Naive thymus-derived CD4-positive, alpha-beta T cell (primary cell): ENCODE measurements at regions of chr9 and their contacts with region 1.

Region 1: GRCh38 chr9:6681147-6681956 is 35.8 kb upstream of the GLDC start:
- DNase-seq: peak; percentile 71 to 95 (median 90)
- ATAC-seq: peak; percentile 90
- H3K4me3 ChIP-seq: peak overlapping the region; percentile 89
- H3K4me3 Mint-ChIP-seq: peak overlapping the region; percentile 88 to 98 (median 95)
- H3K27ac ChIP-seq: peak overlapping the region; percentile 91
- H3K27ac Mint-ChIP-seq: peak overlapping the region; percentile 97 to 100 (median 99)
- H3K4me1 ChIP-seq: peaks cover 0 to 6% of the 10 kb centered on the region in 2 donors
- H3K4me1 Mint-ChIP-seq: peaks cover 7 to 31% (median 20%) of the 10 kb centered on the region in 7 donors
- H3K27me3 ChIP-seq: no peaks in the 10 kb centered on the region
- H3K27me3 Mint-ChIP-seq: no peaks in the 10 kb centered on the region

Region 2: DNA sequence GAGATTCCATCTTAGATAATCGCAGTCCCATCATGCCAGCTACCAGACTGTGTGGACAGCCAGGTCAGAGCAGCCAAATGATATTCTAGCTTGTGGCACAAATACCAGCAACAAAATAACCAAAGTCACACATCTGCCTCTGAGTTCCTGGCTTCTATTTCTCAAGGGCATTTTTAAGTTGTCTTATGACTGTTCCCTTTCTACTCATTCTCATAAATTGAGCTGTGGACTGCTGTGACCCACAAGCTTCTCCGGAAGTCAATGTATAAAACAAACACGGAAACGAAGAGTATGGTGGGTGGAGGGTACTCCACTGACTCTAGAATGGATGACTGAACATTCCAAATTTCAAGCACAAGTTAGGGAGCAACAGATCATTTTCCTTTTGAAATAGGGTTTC is 1127.1 kb before region 1 on chr9:
- CTCF ChIA-PET with region 1: no interaction called
- POLR2A ChIA-PET with region 1: no interaction called
- intact Hi-C with region 1: no loop called
- DNase-seq: no peak
- ATAC-seq: no peak
- H3K4me3 ChIP-seq: no peak overlapping the region
- H3K4me3 Mint-ChIP-seq: no peak overlapping the region
- H3K27ac ChIP-seq: no peak overlapping the region
- H3K27ac Mint-ChIP-seq: peak overlapping the region in 1 of 9 donors; percentile 51
- H3K4me1 ChIP-seq: peaks cover 22 to 26% of the 10 kb centered on the region in 2 donors
- H3K4me1 Mint-ChIP-seq: peaks cover 22 to 41% (median 31%) of the 10 kb centered on the region in 7 donors
- H3K27me3 ChIP-seq: no peaks in the 10 kb centered on the region
- H3K27me3 Mint-ChIP-seq: peaks cover 0 to 4% (median 0%) of the 10 kb centered on the region in 5 donors

Region 3: GRCh38 chr9:5843794-5844504 is 837.4 kb before region 1 on chr9:
- CTCF ChIA-PET with region 1: no interaction called
- POLR2A ChIA-PET with region 1: no interaction called
- intact Hi-C with region 1: loop called in 1 of 2 experiments (anchors 5 kb)
- DNase-seq: peak in 2 of 9 donors; percentile 7 to 22
- ATAC-seq: peak; percentile 20
- H3K4me3 ChIP-seq: peak overlapping the region; percentile 5
- H3K4me3 Mint-ChIP-seq: peak overlapping the region; percentile 75 to 85 (median 80)
- H3K27ac ChIP-seq: peak overlapping the region; percentile 24
- H3K27ac Mint-ChIP-seq: peak overlapping the region; percentile 58 to 93 (median 91)
- H3K4me1 ChIP-seq: peaks cover 45 to 47% of the 10 kb centered on the region in 2 donors
- H3K4me1 Mint-ChIP-seq: peaks cover 50 to 83% (median 64%) of the 10 kb centered on the region in 7 donors
- H3K27me3 ChIP-seq: no peaks in the 10 kb centered on the region
- H3K27me3 Mint-ChIP-seq: no peaks in the 10 kb centered on the region

Region 4: DNA sequence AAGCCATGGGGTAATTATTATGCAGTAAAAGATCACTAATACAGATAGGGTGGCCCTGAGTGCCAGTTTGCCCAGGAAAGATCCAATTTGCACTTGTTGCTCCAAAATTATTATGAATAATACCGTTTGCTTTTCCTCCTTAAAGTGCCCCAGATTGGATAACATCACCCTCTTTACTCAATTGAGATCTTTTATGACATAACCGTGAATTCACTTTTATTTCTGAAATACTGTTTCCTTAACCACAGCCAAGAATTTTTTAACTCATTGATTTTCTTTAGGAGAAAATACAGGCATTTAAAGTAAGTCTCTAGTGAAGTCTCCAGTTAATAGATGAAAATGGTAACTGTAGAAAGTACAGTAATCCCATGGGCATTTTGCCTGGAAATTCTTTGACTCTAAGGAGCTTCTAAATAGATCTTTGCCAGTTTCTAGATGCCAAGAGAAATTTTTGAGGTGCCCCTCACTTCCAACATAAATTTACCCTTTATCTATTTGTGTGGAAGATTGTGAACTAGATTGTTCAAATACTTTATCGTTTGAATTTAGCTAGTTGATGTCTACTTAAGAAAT is 169.2 kb before region 1 on chr9:
- CTCF ChIA-PET with region 1: no interaction called
- POLR2A ChIA-PET with region 1: no interaction called
- intact Hi-C with region 1: no loop called
- DNase-seq: no peak
- ATAC-seq: no peak
- H3K4me3 ChIP-seq: no peak overlapping the region
- H3K4me3 Mint-ChIP-seq: no peak overlapping the region
- H3K27ac ChIP-seq: no peak overlapping the region
- H3K27ac Mint-ChIP-seq: peak overlapping the region in 1 of 9 donors; percentile 13
- H3K4me1 ChIP-seq: no peaks in the 10 kb centered on the region
- H3K4me1 Mint-ChIP-seq: peaks cover 0 to 2% (median 0%) of the 10 kb centered on the region in 7 donors
- H3K27me3 ChIP-seq: no peaks in the 10 kb centered on the region
- H3K27me3 Mint-ChIP-seq: no peaks in the 10 kb centered on the region

Region 5: DNA sequence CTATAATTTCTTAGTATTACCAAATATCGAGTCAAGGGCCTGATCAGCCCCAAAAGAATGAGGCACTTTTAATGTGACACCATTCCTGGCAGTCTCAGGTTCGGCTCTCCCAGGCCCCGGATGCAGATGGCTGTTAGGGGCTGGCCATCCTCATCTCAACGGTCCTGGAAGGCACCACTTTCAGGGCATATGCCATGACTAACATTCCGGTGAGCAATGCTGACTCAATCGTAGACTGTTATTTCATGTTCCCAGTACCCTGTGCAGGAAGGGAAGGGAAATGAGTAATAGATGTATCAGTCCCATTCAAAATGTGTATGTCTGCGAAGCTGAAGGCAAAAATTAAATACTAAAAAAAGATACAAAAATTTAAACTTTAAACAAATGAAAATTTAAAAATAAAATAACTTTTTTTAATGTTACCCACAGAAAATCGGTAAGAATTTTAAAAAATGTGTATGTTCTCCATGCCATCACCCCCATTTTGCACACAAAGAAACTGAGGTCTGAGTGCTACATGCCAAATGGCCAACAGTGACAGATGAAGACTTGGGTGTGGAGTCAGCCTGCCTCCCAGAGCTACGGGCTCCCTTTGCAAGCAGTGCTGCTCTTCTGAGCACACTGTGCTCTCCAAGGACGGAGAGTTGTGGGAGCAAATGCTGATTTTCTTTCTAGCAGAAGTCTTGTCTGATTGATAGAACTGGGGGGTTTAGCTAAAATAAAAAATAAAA is 114.8 kb before region 1 on chr9:
- CTCF ChIA-PET with region 1: no interaction called
- POLR2A ChIA-PET with region 1: no interaction called
- intact Hi-C with region 1: loop called in 1 of 2 experiments (anchors 5 kb)
- DNase-seq: peak in 1 of 9 donors; percentile 57
- ATAC-seq: peak; percentile 69
- H3K4me3 ChIP-seq: no peak overlapping the region
- H3K4me3 Mint-ChIP-seq: peak overlapping the region in 1 of 10 donors; percentile 62
- H3K27ac ChIP-seq: no peak overlapping the region
- H3K27ac Mint-ChIP-seq: peak overlapping the region in 2 of 9 donors; percentile 31 to 72
- H3K4me1 ChIP-seq: no peaks in the 10 kb centered on the region
- H3K4me1 Mint-ChIP-seq: peaks cover 0 to 23% (median 0%) of the 10 kb centered on the region in 7 donors
- H3K27me3 ChIP-seq: no peaks in the 10 kb centered on the region
- H3K27me3 Mint-ChIP-seq: peaks cover 0 to 7% (median 5%) of the 10 kb centered on the region in 5 donors

Region 6: GRCh38 chr9:6645355-6646292 is 35.7 kb before region 1 on chr9 and contains the start of gene GLDC:
- CTCF ChIA-PET with region 1: no interaction called
- POLR2A ChIA-PET with region 1: no interaction called
- intact Hi-C with region 1: loop called (anchors 1 to 2 kb)
- DNase-seq: peak; percentile 6 to 44 (median 23)
- ATAC-seq: peak; percentile 83
- H3K4me3 ChIP-seq: peak within 1 kb of the TSS; percentile 62
- H3K4me3 Mint-ChIP-seq: peak within 1 kb of the TSS; percentile 86 to 92 (median 87)
- H3K27ac ChIP-seq: no peak within 1 kb of the TSS
- H3K27ac Mint-ChIP-seq: peak within 1 kb of the TSS in 6 of 9 donors; percentile 31 to 84 (median 48)
- H3K4me1 ChIP-seq: peaks cover 9 to 11% of the 10 kb centered on the region in 2 donors
- H3K4me1 Mint-ChIP-seq: peaks cover 18 to 25% (median 22%) of the 10 kb centered on the region in 7 donors
- H3K27me3 ChIP-seq: peaks cover 17 to 18% of the 10 kb centered on the region in 2 donors
- H3K27me3 Mint-ChIP-seq: peaks cover 51 to 81% (median 60%) of the 10 kb centered on the region in 5 donors
- total RNA-seq, gene GLDC: 0.56 to 2.2 (median 2.0) TPM in 3 of 5 experiments, not detected in the others

Region 7: GRCh38 chr9:6703898-6704639 is 22.7 kb after region 1 on chr9:
- CTCF ChIA-PET with region 1: no interaction called
- POLR2A ChIA-PET with region 1: interaction called, 16 read pairs
- intact Hi-C with region 1: loop called (anchors 1 kb)
- DNase-seq: peak; percentile 70 to 86 (median 77)
- ATAC-seq: peak; percentile 90
- H3K4me3 ChIP-seq: peak overlapping the region; percentile 98
- H3K4me3 Mint-ChIP-seq: peak overlapping the region; percentile 82 to 98 (median 95)
- H3K27ac ChIP-seq: peak overlapping the region; percentile 97
- H3K27ac Mint-ChIP-seq: peak overlapping the region; percentile 91 to 98 (median 93)
- H3K4me1 ChIP-seq: no peaks in the 10 kb centered on the region
- H3K4me1 Mint-ChIP-seq: peaks cover 3 to 15% (median 6%) of the 10 kb centered on the region in 7 donors
- H3K27me3 ChIP-seq: no peaks in the 10 kb centered on the region
- H3K27me3 Mint-ChIP-seq: peaks cover 0 to 3% (median 0%) of the 10 kb centered on the region in 5 donors

Region 8: GRCh38 chr9:7799234-7799943 is 1118.0 kb after region 1 on chr9 and contains the start of gene DMAC1:
- CTCF ChIA-PET with region 1: no interaction called
- POLR2A ChIA-PET with region 1: no interaction called
- intact Hi-C with region 1: loop called in 1 of 2 experiments (anchors 1 kb)
- DNase-seq: peak; percentile 50 to 79 (median 72)
- ATAC-seq: peak; percentile 96
- H3K4me3 ChIP-seq: peak within 1 kb of the TSS; percentile 96
- H3K4me3 Mint-ChIP-seq: peak within 1 kb of the TSS; percentile 91 to 98 (median 95)
- H3K27ac ChIP-seq: peak within 1 kb of the TSS; percentile 88
- H3K27ac Mint-ChIP-seq: peak within 1 kb of the TSS; percentile 90 to 98 (median 93)
- H3K4me1 ChIP-seq: peaks cover 0 to 8% of the 10 kb centered on the region in 2 donors
- H3K4me1 Mint-ChIP-seq: peaks cover 12 to 62% (median 40%) of the 10 kb centered on the region in 7 donors
- H3K27me3 ChIP-seq: no peaks in the 10 kb centered on the region
- H3K27me3 Mint-ChIP-seq: peaks cover 0 to under 1% (median 0%) of the 10 kb centered on the region in 5 donors
- total RNA-seq, gene DMAC1: 17.5 to 54.1 (median 44.3) TPM

Region 9: GRCh38 chr9:7894231-7894630 is 1212.9 kb after region 1 on chr9:
- CTCF ChIA-PET with region 1: no interaction called
- POLR2A ChIA-PET with region 1: no interaction called
- intact Hi-C with region 1: no loop called
- DNase-seq: no peak
- ATAC-seq: no peak
- H3K4me3 ChIP-seq: no peak overlapping the region
- H3K4me3 Mint-ChIP-seq: no peak overlapping the region
- H3K27ac ChIP-seq: no peak overlapping the region
- H3K27ac Mint-ChIP-seq: no peak overlapping the region
- H3K4me1 ChIP-seq: no peaks in the 10 kb centered on the region
- H3K4me1 Mint-ChIP-seq: no peaks in the 10 kb centered on the region
- H3K27me3 ChIP-seq: no peaks in the 10 kb centered on the region
- H3K27me3 Mint-ChIP-seq: no peaks in the 10 kb centered on the region

Region 10: GRCh38 chr9:8633784-8634183 is 1952.4 kb after region 1 on chr9:
- CTCF ChIA-PET with region 1: no interaction called
- POLR2A ChIA-PET with region 1: no interaction called
- intact Hi-C with region 1: no loop called
- DNase-seq: no peak
- ATAC-seq: no peak
- H3K4me3 ChIP-seq: no peak overlapping the region
- H3K4me3 Mint-ChIP-seq: no peak overlapping the region
- H3K27ac ChIP-seq: no peak overlapping the region
- H3K27ac Mint-ChIP-seq: no peak overlapping the region
- H3K4me1 ChIP-seq: no peaks in the 10 kb centered on the region
- H3K4me1 Mint-ChIP-seq: no peaks in the 10 kb centered on the region
- H3K27me3 ChIP-seq: no peaks in the 10 kb centered on the region
- H3K27me3 Mint-ChIP-seq: peaks cover 0 to 4% (median 0%) of the 10 kb centered on the region in 5 donors